Mammary epithelial cell (primary cell): ENCODE measurements at regions of chr21 and their contacts with region 1.

Region 1: DNA sequence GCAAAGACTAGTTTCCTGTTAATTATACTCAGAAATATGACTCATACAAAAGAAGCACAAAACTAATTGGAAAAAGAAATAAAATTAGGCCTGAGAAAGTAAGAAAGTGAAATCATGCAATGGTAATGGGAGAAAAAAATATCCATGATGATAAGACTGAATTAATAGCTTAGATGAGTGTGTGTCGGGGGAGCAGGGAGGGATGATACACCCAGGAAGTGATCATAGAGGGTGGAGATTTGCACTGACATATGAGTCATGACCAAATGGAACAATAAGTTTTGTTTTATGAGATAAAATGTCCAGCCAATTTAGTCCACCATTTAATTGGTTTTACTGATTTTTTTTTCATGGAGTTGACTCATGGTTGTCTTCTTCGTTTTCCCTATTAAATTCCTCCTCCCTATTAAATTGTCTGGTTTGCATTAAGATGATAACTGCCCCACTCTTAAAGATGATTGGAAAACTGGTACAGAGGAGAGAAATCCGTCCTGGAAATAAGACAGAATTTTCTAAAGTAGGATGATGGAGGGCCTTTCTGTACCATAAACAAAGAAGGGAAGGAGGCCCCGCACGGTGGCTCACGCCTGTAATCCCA is 111.7 kb upstream of the KCNJ6 start:
- DNase-seq: peak; percentile 73
- H3K4me3 ChIP-seq: no peak overlapping the region
- H3K27ac ChIP-seq: no peak overlapping the region
- H3K4me1 ChIP-seq: no peaks in the 10 kb centered on the region
- H3K27me3 ChIP-seq: no peaks in the 10 kb centered on the region
- CTCF ChIP-seq: no peak

Region 2: GRCh38 chr21:37958537-37958936 is 69.5 kb before region 1 on chr21:
- CTCF ChIA-PET with region 1: no interaction called
- dilution Hi-C with region 1: loop called (anchors 5 kb)
- in situ Hi-C with region 1: no loop called
- intact Hi-C with region 1: no loop called
- DNase-seq: no peak
- H3K4me3 ChIP-seq: no peak overlapping the region
- H3K27ac ChIP-seq: no peak overlapping the region
- H3K4me1 ChIP-seq: no peaks in the 10 kb centered on the region
- H3K27me3 ChIP-seq: no peaks in the 10 kb centered on the region
- CTCF ChIP-seq: no peak

Region 3: GRCh38 chr21:38114717-38115333 is 86.8 kb after region 1 on chr21:
- CTCF ChIA-PET with region 1: no interaction called
- dilution Hi-C with region 1: no loop called
- in situ Hi-C with region 1: no loop called
- intact Hi-C with region 1: no loop called
- DNase-seq: no peak
- H3K4me3 ChIP-seq: no peak overlapping the region
- H3K27ac ChIP-seq: no peak overlapping the region
- H3K4me1 ChIP-seq: no peaks in the 10 kb centered on the region
- H3K27me3 ChIP-seq: no peaks in the 10 kb centered on the region
- CTCF ChIP-seq: no peak